G401 (cell line): ENCODE measurements at regions of chr2 and their contacts with region 1.

Region 1: GRCh38 chr2:85148182-85148581 is 15.0 kb downstream of the TCF7L1 start:
- DNase-seq: no peak

Region 2: DNA sequence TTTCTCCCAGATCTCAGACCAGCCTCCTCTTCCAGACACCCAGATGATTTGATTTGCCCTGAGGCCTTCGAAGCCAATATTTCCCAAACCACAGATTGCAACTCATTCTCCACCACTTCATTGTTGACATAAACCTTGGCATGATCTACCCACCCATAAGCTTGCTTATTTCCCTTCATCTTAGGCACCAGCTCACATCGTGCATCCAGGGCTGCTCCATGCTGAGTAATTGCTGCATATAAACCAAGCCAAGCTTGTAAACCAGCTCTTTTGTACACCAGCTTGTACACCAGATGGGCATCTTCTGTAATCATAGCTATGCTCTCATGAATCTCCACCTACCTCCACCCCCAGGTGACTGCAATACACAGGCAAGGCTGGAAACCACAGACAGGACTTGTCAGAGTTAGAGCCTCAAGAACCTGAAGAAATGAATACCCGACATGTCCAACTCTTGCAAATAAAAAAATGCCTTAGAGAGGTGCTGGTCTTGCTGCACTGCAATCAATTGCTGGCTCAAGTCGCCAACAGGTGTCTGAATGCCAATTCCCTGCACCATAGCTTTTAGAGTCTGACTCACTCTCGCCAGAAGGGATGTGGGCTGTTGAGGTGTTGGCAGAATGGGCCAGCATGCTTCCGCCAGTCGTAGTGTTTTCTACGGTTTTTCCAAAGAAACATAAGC is 298.8 kb before region 1 on chr2:
- in situ Hi-C with region 1: no loop called
- DNase-seq: peak; percentile 90

Region 3: DNA sequence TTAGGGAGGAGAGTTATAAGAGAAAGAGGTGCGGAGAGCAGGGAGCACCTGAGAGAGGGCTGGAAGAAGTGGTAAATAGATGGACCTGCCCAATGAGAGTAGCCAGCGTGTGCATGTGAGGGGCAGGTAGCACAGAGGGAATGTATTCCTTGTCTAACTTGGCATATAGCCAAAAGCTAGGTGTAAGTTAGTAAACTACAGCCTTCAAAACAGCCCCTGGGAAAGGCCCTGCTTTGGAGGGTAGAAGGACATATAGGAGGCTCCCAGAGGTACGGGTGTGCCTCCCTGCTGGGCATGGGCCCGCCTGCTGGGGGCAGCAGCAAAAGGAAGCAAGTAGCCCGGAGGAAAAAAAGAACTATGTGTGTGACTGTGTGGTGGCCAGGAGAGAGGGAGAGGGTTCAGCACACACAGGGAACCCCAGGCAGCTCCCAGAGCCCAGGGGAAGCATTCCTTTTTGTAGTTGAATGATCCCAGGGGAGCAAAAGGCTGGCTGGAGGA is 33.0 kb after region 1 on chr2:
- in situ Hi-C with region 1: loop called (anchors 5 kb)
- DNase-seq: no peak

Region 4: GRCh38 chr2:85243101-85244072 is 95.2 kb after region 1 on chr2:
- in situ Hi-C with region 1: no loop called
- DNase-seq: no peak